ENCODE measurements at regions of chr17 and their contacts with region 1.

Region 1: GRCh38 chr17:82781894-82782274 is 30.0 kb downstream of the TBCD start:
- DNase-seq: peak; percentile 17
- ATAC-seq: peak; percentile 100
- H3K4me3 ChIP-seq: no peak overlapping the region
- H3K27ac ChIP-seq: no peak overlapping the region
- H3K4me1 ChIP-seq: no peaks in the 10 kb centered on the region; the same call in 1 of the 2 replicates
- H3K27me3 ChIP-seq: no peaks in the 10 kb centered on the region
- CTCF ChIP-seq: peak; percentile 94 to 99 (median 99)
- EP300 ChIP-seq: no peak
- POLR2A ChIP-seq: no peak
- RAD21 ChIP-seq: peak; percentile 99

Region 2: DNA sequence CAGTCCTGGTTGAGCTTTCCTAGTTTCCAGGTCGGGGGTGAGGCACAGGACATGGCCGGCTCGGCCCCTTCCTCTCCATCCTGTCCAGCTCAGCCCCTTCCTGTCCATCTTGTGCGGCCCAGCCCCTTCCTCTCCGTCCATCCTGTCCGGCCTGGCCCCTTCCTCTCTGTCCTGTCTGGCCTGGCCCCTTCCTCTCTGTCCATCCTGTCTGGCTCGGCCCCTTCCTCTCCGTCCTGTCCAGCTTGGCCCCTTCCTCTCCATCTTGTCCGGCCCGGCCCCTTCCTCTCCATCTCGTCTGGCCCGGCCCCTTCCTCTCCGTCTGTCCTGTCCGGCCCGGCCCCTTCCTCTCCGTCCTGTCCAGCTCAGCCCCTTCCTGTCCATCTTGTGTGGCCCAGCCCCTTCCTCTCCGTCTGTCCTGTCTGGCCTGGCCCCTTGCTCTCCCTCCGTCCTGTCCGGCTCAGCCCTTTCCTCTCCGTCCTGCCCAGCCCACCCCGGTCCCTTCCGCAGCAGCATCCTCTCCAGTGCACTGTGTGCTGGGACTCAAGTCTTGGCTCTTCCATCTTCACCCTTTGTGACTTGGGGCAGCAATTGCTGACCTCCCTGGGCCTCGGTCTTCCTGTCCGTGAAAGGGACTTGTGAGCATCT is 63.4 kb after region 1 on chr17:
- CTCF ChIA-PET with region 1: interaction called, 4 read pairs
- POLR2A ChIA-PET with region 1: no interaction called
- RAD21 ChIA-PET with region 1: interaction called, 12 read pairs
- SMC1A ChIA-PET with region 1: interaction called, 5 read pairs
- in situ Hi-C with region 1: no loop called
- intact Hi-C with region 1: no loop called
- DNase-seq: no peak
- ATAC-seq: no peak
- H3K4me3 ChIP-seq: no peak overlapping the region
- H3K27ac ChIP-seq: no peak overlapping the region
- H3K4me1 ChIP-seq: peaks cover 18% of the 10 kb centered on the region
- H3K27me3 ChIP-seq: no peaks in the 10 kb centered on the region
- CTCF ChIP-seq: no peak
- EP300 ChIP-seq: no peak
- POLR2A ChIP-seq: no peak
- RAD21 ChIP-seq: no peak

Region 3: GRCh38 chr17:82863941-82864774 is 82.3 kb after region 1 on chr17:
- CTCF ChIA-PET with region 1: interaction called, 20 read pairs
- POLR2A ChIA-PET with region 1: interaction called, 3 read pairs
- RAD21 ChIA-PET with region 1: interaction called, 17 read pairs
- SMC1A ChIA-PET with region 1: interaction called, 14 read pairs
- in situ Hi-C with region 1: no loop called
- intact Hi-C with region 1: loop called (anchors 10 kb)
- DNase-seq: peak; percentile 97
- ATAC-seq: peak; percentile 84
- H3K4me3 ChIP-seq: peak overlapping the region; percentile 31; the same call in 1 of the 2 replicates
- H3K27ac ChIP-seq: peak overlapping the region; percentile 98
- H3K4me1 ChIP-seq: peaks cover 74% of the 10 kb centered on the region
- H3K27me3 ChIP-seq: no peaks in the 10 kb centered on the region
- CTCF ChIP-seq: no peak
- EP300 ChIP-seq: peak; percentile 82 to 91
- POLR2A ChIP-seq: peak; percentile 70
- RAD21 ChIP-seq: no peak

Region 4: DNA sequence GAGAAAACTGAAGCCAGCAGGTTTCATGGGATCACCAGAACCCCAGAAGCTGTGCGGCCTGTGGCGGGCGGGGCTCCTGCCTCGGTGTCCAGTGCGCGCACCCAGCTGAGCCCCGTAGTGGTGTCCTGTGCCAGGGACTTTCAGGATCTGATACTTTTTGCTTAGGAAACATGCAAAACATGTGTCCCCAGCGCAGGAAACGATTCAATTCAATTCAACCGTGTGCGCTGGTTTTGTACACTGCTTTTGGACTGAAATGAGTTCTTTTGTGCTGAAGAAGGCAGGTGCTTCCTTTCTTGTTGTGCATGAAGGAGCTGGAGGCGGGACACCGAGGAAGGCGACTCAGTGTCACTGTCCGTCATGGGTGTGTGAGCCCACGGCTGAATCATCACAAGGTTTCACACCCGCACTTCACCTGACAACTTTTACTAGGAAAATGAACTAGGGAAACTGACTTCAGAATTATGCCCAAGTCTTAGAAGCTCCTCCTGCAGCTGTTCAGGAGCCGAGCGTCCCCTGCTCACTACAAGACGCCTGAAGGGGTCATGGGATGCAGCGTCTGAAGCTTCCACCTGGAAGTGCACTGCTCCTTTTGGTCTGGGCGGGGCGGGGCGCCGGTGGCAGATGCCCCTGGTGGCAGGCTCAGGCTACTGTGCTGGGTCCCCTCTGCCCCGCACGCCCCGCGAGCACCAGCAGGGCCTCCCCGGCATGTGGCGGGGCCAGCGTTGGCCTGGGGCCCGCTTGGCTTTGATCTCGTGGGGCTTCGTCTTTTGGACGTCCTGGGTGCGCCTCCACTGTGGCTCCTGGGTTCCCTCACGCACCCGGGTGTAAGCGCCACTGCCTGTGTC is 89.4 kb after region 1 on chr17:
- CTCF ChIA-PET with region 1: interaction called, 13 read pairs
- POLR2A ChIA-PET with region 1: no interaction called
- RAD21 ChIA-PET with region 1: interaction called, 13 read pairs
- SMC1A ChIA-PET with region 1: interaction called, 6 read pairs
- in situ Hi-C with region 1: no loop called
- intact Hi-C with region 1: loop called (anchors 10 kb)
- DNase-seq: peak; percentile 82
- ATAC-seq: peak; percentile 95
- H3K4me3 ChIP-seq: no peak overlapping the region
- H3K27ac ChIP-seq: peak overlapping the region; percentile 91
- H3K4me1 ChIP-seq: peaks cover 51% of the 10 kb centered on the region
- H3K27me3 ChIP-seq: no peaks in the 10 kb centered on the region
- CTCF ChIP-seq: peak; percentile 20 to 65 (median 49)
- EP300 ChIP-seq: 0 out of 4 replicates have a peak, but pooled peaks of 1 of the 2 experiments have one; percentile 39
- POLR2A ChIP-seq: no peak
- RAD21 ChIP-seq: 0 out of 2 replicates have a peak, but pooled peaks have one; percentile 6

Region 5: GRCh38 chr17:82913295-82914042 is 131.6 kb after region 1 on chr17:
- CTCF ChIA-PET with region 1: interaction called, 25 read pairs
- POLR2A ChIA-PET with region 1: no interaction called
- RAD21 ChIA-PET with region 1: interaction called, 24 read pairs
- SMC1A ChIA-PET with region 1: interaction called, 18 read pairs
- in situ Hi-C with region 1: no loop called
- intact Hi-C with region 1: loop called (anchors 1 kb)
- DNase-seq: no peak
- ATAC-seq: no peak
- H3K4me3 ChIP-seq: no peak overlapping the region
- H3K27ac ChIP-seq: no peak overlapping the region
- H3K4me1 ChIP-seq: peaks cover 28% of the 10 kb centered on the region
- H3K27me3 ChIP-seq: no peaks in the 10 kb centered on the region
- CTCF ChIP-seq: no peak; a peak in 1 of 6 replicates
- EP300 ChIP-seq: no peak
- POLR2A ChIP-seq: no peak
- RAD21 ChIP-seq: peak; percentile 44; the same call in 1 of the 2 replicates

Region 6: GRCh38 chr17:82924798-82925197 is 142.9 kb after region 1 on chr17:
- CTCF ChIA-PET with region 1: interaction called, 4 read pairs
- POLR2A ChIA-PET with region 1: interaction called, 4 read pairs
- RAD21 ChIA-PET with region 1: interaction called, 4 read pairs
- SMC1A ChIA-PET with region 1: no interaction called
- in situ Hi-C with region 1: loop called (anchors 5 kb)
- intact Hi-C with region 1: no loop called
- DNase-seq: no peak
- ATAC-seq: no peak
- H3K4me3 ChIP-seq: no peak overlapping the region
- H3K27ac ChIP-seq: no peak overlapping the region
- H3K4me1 ChIP-seq: no peaks in the 10 kb centered on the region
- H3K27me3 ChIP-seq: no peaks in the 10 kb centered on the region
- CTCF ChIP-seq: no peak
- EP300 ChIP-seq: no peak
- POLR2A ChIP-seq: no peak
- RAD21 ChIP-seq: no peak

Measured in GM12878 (cell line).